CD4-positive, alpha-beta T cell (primary cell): ENCODE measurements at regions of chr12 and their contacts with region 1.

Region 1: DNA sequence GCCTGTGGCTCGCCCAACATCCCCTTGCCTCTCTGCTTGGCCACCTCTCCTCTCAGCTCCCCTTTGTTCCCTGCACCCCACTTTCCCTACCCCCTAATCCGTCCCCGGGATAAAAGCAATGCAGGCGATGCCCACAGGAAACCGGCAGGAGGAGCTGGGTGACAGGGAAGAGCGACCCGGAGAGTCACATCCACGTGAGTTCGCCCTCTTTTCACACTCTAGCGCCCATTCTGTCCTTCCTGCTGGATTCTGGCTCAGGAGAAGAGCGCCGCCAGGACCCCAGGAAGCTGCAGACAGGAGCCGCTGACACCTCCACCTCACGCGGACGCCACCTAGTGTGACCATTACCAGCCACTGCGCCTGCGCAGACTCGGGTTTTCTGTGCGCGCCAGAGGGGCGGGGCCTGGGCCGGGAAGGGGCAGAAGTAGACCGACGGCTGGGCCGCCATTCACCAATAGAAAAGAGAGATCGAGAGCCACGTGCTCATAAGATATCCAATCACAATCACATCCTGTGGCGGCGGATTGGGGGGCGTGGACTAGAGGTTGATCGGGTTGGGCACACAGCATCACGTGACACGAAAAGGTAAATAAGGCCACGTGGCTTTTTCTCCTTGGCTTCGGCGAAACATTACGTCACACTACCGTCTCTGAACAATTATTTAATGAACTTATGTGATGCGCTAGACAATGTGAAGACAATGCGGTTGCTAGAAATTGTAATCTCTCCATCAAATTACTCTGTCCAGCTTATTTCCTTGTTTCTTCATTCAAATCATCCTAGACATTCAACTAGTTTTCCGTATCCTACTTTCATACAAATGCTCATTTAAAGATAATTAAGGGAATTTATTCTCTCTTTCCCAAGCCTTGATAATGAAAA is 10.1 kb downstream of the PLA2G1B start:
- DNase-seq: peak; percentile 99 to 100 (median 100)
- ATAC-seq: peak; percentile 98
- H3K4me3 ChIP-seq: peak overlapping the region; percentile 80
- H3K4me3 Mint-ChIP-seq: peak overlapping the region; percentile 89
- H3K27ac ChIP-seq: peak overlapping the region; percentile 88 to 97
- H3K27ac Mint-ChIP-seq: peak overlapping the region; percentile 95
- H3K4me1 ChIP-seq: peaks cover 15% of the 10 kb centered on the region
- H3K4me1 Mint-ChIP-seq: peaks cover 16% of the 10 kb centered on the region
- H3K27me3 ChIP-seq: no peaks in the 10 kb centered on the region
- H3K27me3 Mint-ChIP-seq: no peaks in the 10 kb centered on the region
- CTCF ChIP-seq: peak; percentile 66

Region 2: DNA sequence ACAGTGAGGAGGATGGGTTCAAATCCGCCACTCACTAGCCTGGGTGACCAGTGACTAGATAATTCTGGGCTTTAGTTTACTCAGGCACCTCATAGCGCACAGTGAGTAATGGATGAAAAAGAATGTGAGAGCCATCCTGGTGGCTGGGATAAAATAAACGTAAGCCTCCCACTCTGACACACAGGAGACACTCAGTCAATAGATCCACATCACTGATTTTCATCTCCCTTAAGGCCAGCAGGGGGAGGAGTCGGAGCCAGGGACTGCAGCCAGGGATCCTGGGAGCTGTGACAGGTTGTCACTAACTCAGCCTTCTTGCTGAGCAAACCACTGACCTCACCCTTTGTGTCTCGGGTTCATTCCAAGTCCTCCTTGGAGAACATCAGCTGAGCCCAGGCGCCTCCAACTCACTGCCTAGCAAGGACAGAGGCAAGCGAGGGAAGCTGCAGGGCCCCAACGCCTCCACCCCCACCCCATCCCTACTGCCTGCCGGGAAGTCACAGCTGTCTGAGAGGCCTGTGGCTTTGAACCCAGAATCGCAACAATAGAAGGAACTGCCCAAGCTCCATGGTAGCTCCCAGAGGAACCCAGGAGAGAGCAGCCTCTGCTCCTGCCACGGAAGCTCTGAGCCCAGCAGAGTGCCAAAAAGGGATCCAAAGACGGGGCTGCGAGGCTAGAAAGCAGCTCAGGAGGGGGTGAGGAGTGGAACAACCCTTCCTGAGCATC is 82.7 kb before region 1 on chr12:
- CTCF ChIA-PET with region 1: no interaction called
- POLR2A ChIA-PET with region 1: no interaction called
- intact Hi-C with region 1: no loop called
- DNase-seq: peak in 2 of 14 experiments; percentile 39 to 56
- ATAC-seq: no peak
- H3K4me3 ChIP-seq: no peak overlapping the region
- H3K4me3 Mint-ChIP-seq: no peak overlapping the region
- H3K27ac ChIP-seq: no peak overlapping the region
- H3K27ac Mint-ChIP-seq: peak overlapping the region; percentile 88
- H3K4me1 ChIP-seq: peaks cover 99% of the 10 kb centered on the region
- H3K4me1 Mint-ChIP-seq: peaks cover 85% of the 10 kb centered on the region
- H3K27me3 ChIP-seq: no peaks in the 10 kb centered on the region
- H3K27me3 Mint-ChIP-seq: no peaks in the 10 kb centered on the region
- CTCF ChIP-seq: no peak

Region 3: DNA sequence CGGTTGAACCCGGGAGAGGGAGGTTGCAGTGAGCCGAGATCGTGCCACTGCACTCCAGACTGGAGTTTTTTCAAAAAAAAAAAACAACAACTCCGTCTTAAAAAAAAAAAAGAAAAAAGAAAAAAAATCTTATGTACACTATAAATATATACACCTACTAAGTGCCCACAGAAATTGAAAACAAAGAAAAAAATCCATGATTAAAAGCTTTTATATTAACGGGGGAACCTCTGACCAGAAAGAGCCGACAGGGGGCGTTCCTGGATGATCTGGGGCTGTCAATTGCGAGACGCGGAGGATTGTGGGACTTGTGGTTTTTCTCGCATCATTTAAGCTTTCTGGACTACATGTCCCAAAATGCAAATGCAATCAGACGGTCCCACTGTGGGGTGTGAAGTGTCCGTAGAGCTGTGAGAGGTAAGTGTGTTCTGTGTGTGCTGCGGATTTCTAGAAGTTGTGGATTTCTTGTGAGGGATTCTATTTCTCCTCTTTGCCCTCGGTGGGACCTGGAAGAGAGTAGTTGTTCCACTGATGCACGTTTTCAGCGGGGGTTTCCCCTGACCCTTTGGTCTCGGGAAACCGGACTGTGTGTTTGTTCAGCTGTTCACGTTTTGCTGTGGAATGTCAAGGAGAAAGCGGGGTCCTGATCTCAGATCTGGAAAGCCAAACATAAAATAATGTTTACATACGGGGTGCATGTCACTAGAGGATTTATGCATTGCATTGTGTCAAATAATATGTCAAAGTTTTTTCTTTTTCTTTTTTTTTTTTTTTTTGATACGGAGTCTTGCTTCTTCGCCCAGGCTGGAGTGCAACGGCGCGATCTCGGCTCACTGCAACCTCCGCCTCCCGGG is 15.3 kb before region 1 on chr12 and contains the start of gene SIRT4:
- CTCF ChIA-PET with region 1: interaction called, 27 read pairs
- POLR2A ChIA-PET with region 1: interaction called, 31 read pairs
- intact Hi-C with region 1: loop called (anchors 1 kb)
- DNase-seq: peak; percentile 77 to 96 (median 86)
- ATAC-seq: peak; percentile 99
- H3K4me3 ChIP-seq: peak within 1 kb of the TSS; percentile 97
- H3K4me3 Mint-ChIP-seq: peak within 1 kb of the TSS; percentile 97
- H3K27ac ChIP-seq: peak within 1 kb of the TSS in 1 of 2 donors; percentile 60
- H3K27ac Mint-ChIP-seq: peak within 1 kb of the TSS; percentile 79
- H3K4me1 ChIP-seq: peaks cover 13% of the 10 kb centered on the region
- H3K4me1 Mint-ChIP-seq: peaks cover 11% of the 10 kb centered on the region
- H3K27me3 ChIP-seq: no peaks in the 10 kb centered on the region
- H3K27me3 Mint-ChIP-seq: no peaks in the 10 kb centered on the region
- CTCF ChIP-seq: peak; percentile 78
- total RNA-seq, gene SIRT4: 0.59 TPM in 1 of 2 experiments, not detected in the other

Region 4: DNA sequence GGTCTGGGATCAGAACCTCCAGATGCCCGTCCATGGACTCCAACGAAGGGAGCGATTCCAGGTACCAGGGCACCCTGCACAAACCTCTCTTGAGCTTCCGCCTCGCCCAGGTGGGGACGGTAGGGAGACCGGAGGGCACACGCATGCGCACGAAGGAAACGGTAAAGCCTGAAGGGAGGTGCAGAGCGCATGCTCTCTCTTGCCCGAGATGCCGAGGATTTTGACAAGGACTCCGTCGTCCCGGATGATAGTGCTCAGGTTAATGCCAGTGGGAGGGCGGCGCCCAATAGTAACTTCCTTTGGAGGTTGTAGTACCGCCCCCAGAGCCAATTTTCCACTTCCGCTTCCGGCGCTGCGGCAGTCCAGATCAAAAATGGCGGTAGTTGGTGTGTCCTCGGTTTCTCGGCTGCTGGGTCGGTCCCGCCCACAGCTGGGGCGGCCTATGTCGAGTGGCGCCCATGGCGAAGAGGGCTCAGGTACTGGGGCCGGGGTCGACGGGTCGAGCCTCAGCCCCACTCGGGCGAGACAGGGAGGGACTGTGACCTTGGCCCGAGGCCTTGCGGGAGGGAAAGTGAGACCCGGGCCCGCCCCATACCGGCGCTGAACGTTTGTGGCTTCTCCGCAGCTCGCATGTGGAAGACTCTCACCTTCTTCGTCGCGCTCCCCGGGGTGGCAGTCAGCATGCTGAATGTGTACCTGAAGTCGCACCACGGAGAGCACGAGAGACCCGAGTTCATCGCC is 120.5 kb after region 1 on chr12 and contains the start of gene COX6A1:
- CTCF ChIA-PET with region 1: no interaction called
- POLR2A ChIA-PET with region 1: no interaction called
- intact Hi-C with region 1: loop called in 1 of 2 experiments (anchors 10 kb)
- DNase-seq: peak; percentile 91 to 100 (median 96)
- ATAC-seq: peak; percentile 94
- H3K4me3 ChIP-seq: peak within 1 kb of the TSS; percentile 88
- H3K4me3 Mint-ChIP-seq: peak within 1 kb of the TSS; percentile 97
- H3K27ac ChIP-seq: peak within 1 kb of the TSS; percentile 69 to 88
- H3K27ac Mint-ChIP-seq: peak within 1 kb of the TSS; percentile 94
- H3K4me1 ChIP-seq: peaks cover 26% of the 10 kb centered on the region
- H3K4me1 Mint-ChIP-seq: peaks cover 31% of the 10 kb centered on the region
- H3K27me3 ChIP-seq: no peaks in the 10 kb centered on the region
- H3K27me3 Mint-ChIP-seq: no peaks in the 10 kb centered on the region
- CTCF ChIP-seq: no peak
- total RNA-seq, gene COX6A1: 112 to 116 TPM

Region 5: DNA sequence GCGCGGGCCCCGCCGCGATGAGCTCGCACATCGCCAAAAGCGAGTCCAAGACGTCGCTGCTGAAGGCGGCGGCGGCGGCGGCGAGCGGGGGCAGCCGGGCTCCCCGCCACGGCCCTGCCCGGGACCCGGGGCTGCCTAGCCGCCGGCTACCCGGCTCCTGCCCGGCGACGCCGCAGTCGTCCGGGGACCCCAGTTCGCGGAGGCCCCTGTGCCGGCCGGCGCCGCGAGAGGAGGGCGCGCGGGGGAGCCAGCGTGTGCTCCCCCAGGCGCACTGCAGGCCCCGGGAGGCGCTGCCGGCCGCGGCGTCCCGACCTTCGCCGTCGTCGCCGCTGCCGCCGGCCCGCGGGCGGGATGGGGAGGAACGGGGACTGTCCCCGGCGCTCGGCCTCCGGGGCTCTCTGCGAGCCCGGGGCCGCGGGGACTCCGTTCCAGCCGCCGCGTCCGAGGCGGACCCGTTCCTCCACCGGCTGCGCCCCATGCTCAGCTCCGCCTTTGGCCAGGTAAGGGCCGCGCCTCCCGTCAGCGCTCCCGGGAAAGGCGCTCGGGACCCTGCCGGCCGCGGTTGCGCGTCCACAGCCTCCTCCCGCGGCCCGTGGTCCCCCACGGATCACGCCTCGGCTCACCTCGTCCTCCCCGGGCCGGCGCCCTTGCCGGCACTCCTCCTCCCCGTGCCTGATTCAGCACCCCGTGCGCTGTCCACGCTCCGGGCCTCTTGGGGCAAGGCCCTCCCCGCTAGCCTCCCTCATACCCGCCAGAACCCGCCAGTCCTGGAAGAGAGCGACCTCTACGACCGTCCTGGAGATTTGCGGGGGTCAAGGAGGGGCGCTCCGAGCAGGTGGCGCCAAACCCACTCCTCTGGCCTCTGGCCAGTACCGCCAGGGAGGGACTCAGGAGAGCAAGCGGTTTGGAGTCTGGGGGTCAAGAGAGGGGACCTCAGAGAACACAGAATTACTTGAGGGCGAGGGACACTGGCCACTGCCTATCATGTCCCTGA is 323.7 kb after region 1 on chr12:
- CTCF ChIA-PET with region 1: no interaction called
- POLR2A ChIA-PET with region 1: no interaction called
- intact Hi-C with region 1: loop called in 1 of 2 experiments (anchors 10 kb)
- DNase-seq: peak; percentile 26 to 75 (median 43)
- ATAC-seq: peak; percentile 84
- H3K4me3 ChIP-seq: no peak overlapping the region
- H3K4me3 Mint-ChIP-seq: peak overlapping the region; percentile 83
- H3K27ac ChIP-seq: no peak overlapping the region
- H3K27ac Mint-ChIP-seq: no peak overlapping the region
- H3K4me1 ChIP-seq: peaks cover 12% of the 10 kb centered on the region
- H3K4me1 Mint-ChIP-seq: peaks cover 6% of the 10 kb centered on the region
- H3K27me3 ChIP-seq: peaks cover 48 to 54% of the 10 kb centered on the region in 2 experiments
- H3K27me3 Mint-ChIP-seq: peaks cover 59% of the 10 kb centered on the region
- CTCF ChIP-seq: no peak

Region 6: GRCh38 chr12:120710031-120710804 is 392.8 kb after region 1 on chr12 and contains the start of gene UNC119B:
- CTCF ChIA-PET with region 1: no interaction called
- POLR2A ChIA-PET with region 1: no interaction called
- intact Hi-C with region 1: loop called in 1 of 2 experiments (anchors 10 kb)
- DNase-seq: peak; percentile 57 to 87 (median 70)
- ATAC-seq: peak; percentile 86
- H3K4me3 ChIP-seq: peak within 1 kb of the TSS; percentile 83
- H3K4me3 Mint-ChIP-seq: peak within 1 kb of the TSS; percentile 96
- H3K27ac ChIP-seq: peak within 1 kb of the TSS; percentile 13 to 58
- H3K27ac Mint-ChIP-seq: peak within 1 kb of the TSS; percentile 86
- H3K4me1 ChIP-seq: peaks cover 30% of the 10 kb centered on the region
- H3K4me1 Mint-ChIP-seq: peaks cover 42% of the 10 kb centered on the region
- H3K27me3 ChIP-seq: no peaks in the 10 kb centered on the region
- H3K27me3 Mint-ChIP-seq: no peaks in the 10 kb centered on the region
- CTCF ChIP-seq: no peak
- total RNA-seq, gene UNC119B: 10.7 TPM